MCF 10A (cell line): ENCODE measurements at regions of chr2 and their contacts with region 1.

Region 1: GRCh38 chr2:117470311-117471095 is 344.0 kb upstream of the DDX18 start:
- DNase-seq: peak; percentile 61
- H3K4me3 Mint-ChIP-seq: no peak overlapping the region
- H3K27ac Mint-ChIP-seq: no peak overlapping the region
- H3K4me1 Mint-ChIP-seq: no peaks in the 10 kb centered on the region
- H3K27me3 Mint-ChIP-seq: no peaks in the 10 kb centered on the region
- CTCF ChIP-seq: peak; percentile 43

Region 2: DNA sequence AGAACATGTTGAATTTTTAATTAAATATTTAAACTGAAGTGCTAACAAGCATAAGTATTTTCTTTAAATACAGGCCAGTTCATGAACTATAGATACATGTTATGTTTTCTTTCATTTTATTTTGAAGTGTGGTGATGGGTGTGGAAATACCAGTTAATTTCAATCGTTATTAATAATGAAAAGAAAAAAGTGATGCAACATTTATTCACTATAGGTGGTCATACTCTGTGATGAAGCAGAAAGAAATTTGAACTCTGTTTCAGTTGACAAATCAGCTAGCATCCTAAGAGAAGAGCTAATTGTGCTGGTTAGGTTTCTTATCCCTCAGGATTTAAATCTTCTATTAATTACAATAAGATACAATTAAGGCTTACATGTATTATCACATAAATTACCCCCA is 451.1 kb before region 1 on chr2:
- CTCF ChIA-PET with region 1: no interaction called
- POLR2A ChIA-PET with region 1: no interaction called
- intact Hi-C with region 1: no loop called
- DNase-seq: no peak
- H3K4me3 Mint-ChIP-seq: no peak overlapping the region
- H3K27ac Mint-ChIP-seq: no peak overlapping the region
- H3K4me1 Mint-ChIP-seq: no peaks in the 10 kb centered on the region
- H3K27me3 Mint-ChIP-seq: no peaks in the 10 kb centered on the region
- CTCF ChIP-seq: no peak

Region 3: GRCh38 chr2:117349687-117350086 is 120.8 kb before region 1 on chr2:
- CTCF ChIA-PET with region 1: no interaction called
- POLR2A ChIA-PET with region 1: no interaction called
- intact Hi-C with region 1: no loop called
- DNase-seq: no peak
- H3K4me3 Mint-ChIP-seq: no peak overlapping the region
- H3K27ac Mint-ChIP-seq: no peak overlapping the region
- H3K4me1 Mint-ChIP-seq: no peaks in the 10 kb centered on the region
- H3K27me3 Mint-ChIP-seq: no peaks in the 10 kb centered on the region
- CTCF ChIP-seq: no peak

Region 4: GRCh38 chr2:117536139-117536538 is 65.6 kb after region 1 on chr2:
- CTCF ChIA-PET with region 1: interaction called, 39 read pairs
- POLR2A ChIA-PET with region 1: no interaction called
- intact Hi-C with region 1: no loop called
- DNase-seq: peak; percentile 48
- H3K4me3 Mint-ChIP-seq: no peak overlapping the region
- H3K27ac Mint-ChIP-seq: no peak overlapping the region
- H3K4me1 Mint-ChIP-seq: no peaks in the 10 kb centered on the region
- H3K27me3 Mint-ChIP-seq: no peaks in the 10 kb centered on the region
- CTCF ChIP-seq: peak; percentile 38

Region 5: DNA sequence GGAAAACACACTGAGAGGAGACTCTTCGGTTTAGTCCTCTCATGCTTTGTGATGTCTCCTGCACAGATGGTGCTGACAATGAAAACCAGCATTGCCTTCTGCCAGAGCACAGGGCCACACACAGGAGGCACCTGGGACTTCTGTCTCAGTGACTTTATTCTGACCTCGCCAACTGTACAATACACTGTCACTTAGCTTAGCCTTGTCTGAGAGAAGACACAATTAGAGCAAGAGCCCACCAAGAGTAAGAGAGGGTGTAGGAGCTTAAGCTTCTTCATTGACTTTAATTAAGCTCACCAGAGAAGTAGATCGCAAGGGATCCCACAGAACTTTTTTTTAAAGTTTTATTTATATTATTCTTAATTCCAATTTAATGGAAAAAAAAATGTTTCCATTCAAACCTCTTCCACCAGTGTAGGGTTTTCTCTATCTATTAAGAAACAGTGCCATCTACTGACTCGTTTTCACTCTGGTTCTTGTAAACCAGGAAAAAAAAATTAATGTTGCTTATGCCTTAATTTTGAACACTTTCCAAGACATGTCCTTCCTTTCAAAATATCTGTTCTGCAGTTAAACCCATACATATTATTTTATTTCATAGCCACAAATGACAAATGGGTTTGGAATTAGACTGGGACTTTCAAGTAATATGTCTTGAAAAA is 301.6 kb after region 1 on chr2:
- CTCF ChIA-PET with region 1: interaction called, 6 read pairs
- POLR2A ChIA-PET with region 1: interaction called, 3 read pairs
- intact Hi-C with region 1: loop called (anchors 1 kb)
- DNase-seq: peak; percentile 49
- H3K4me3 Mint-ChIP-seq: no peak overlapping the region
- H3K27ac Mint-ChIP-seq: no peak overlapping the region
- H3K4me1 Mint-ChIP-seq: peaks cover 15% of the 10 kb centered on the region
- H3K27me3 Mint-ChIP-seq: peaks cover 18% of the 10 kb centered on the region
- CTCF ChIP-seq: peak; percentile 35

Region 6: DNA sequence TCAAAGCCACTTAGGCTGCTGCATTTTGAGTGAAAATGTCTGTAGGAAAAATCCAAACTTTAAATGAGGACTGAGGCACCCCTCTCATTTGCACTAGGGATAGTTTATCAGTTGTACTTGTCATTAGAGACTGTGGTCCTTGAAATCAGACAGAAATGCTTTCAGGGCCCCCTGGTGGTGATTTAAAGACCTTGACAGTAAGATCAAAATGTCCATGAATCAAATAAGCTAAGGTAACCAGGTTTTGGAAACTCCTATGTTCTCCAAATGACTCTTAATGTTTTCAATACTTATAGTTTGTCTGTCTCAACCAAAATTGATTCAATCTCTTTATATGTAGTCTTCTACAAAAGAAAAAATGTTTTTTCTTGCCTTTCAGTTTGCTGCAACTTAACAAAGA is 315.2 kb after region 1 on chr2:
- CTCF ChIA-PET with region 1: interaction called, 10 read pairs
- POLR2A ChIA-PET with region 1: no interaction called
- intact Hi-C with region 1: no loop called
- DNase-seq: peak; percentile 72
- H3K4me3 Mint-ChIP-seq: no peak overlapping the region
- H3K27ac Mint-ChIP-seq: no peak overlapping the region
- H3K4me1 Mint-ChIP-seq: no peaks in the 10 kb centered on the region
- H3K27me3 Mint-ChIP-seq: no peaks in the 10 kb centered on the region
- CTCF ChIP-seq: peak; percentile 64